Transverse colon (tissue), 4 donors: ENCODE measurements at regions of chr16 and their contacts with region 1.

Region 1: GRCh38 chr16:55465077-55465896 is 13.7 kb upstream of the MMP2 start:
- DNase-seq: peak; percentile 91
- H3K4me3 ChIP-seq: no peak overlapping the region
- H3K27ac ChIP-seq: no peak overlapping the region
- H3K4me1 ChIP-seq: peaks cover 0 to under 1% (median 0%) of the 10 kb centered on the region in 4 donors
- H3K27me3 ChIP-seq: no peaks in the 10 kb centered on the region
- CTCF ChIP-seq: peak; percentile 99 to 100 (median 100)
- EP300 ChIP-seq: no peak
- POLR2A ChIP-seq: no peak

Region 2: GRCh38 chr16:55076053-55076452 is 389.2 kb before region 1 on chr16:
- in situ Hi-C with region 1: no loop called
- intact Hi-C with region 1: no loop called
- DNase-seq: no peak
- H3K4me3 ChIP-seq: no peak overlapping the region
- H3K27ac ChIP-seq: no peak overlapping the region
- H3K4me1 ChIP-seq: no peaks in the 10 kb centered on the region
- H3K27me3 ChIP-seq: no peaks in the 10 kb centered on the region
- CTCF ChIP-seq: no peak
- EP300 ChIP-seq: no peak
- POLR2A ChIP-seq: no peak

Region 3: DNA sequence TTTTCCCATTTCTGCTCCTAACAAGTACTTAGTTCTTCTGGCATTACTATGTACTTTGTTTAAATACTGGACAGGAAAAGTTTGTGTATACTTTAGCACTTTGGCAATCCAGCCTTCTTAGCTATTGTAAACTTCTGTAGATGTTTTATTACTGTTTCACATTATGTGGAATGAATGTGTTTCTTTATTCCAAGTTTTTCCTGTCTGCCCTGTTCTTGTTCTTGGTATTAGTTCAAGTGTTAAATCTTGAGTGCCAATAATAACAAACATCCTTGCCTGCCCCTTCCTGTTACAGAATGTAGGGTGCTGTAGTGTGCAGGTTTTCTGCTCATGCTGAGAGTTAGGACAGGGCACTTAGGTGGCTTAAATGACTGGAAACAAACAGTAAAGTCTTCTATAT is 93.9 kb after region 1 on chr16:
- in situ Hi-C with region 1: no loop called
- intact Hi-C with region 1: no loop called
- DNase-seq: no peak
- H3K4me3 ChIP-seq: no peak overlapping the region
- H3K27ac ChIP-seq: peak overlapping the region in 1 of 4 donors; percentile 33
- H3K4me1 ChIP-seq: peaks cover 7 to 36% (median 17%) of the 10 kb centered on the region in 4 donors
- H3K27me3 ChIP-seq: no peaks in the 10 kb centered on the region
- CTCF ChIP-seq: no peak
- EP300 ChIP-seq: no peak
- POLR2A ChIP-seq: no peak

Region 4: DNA sequence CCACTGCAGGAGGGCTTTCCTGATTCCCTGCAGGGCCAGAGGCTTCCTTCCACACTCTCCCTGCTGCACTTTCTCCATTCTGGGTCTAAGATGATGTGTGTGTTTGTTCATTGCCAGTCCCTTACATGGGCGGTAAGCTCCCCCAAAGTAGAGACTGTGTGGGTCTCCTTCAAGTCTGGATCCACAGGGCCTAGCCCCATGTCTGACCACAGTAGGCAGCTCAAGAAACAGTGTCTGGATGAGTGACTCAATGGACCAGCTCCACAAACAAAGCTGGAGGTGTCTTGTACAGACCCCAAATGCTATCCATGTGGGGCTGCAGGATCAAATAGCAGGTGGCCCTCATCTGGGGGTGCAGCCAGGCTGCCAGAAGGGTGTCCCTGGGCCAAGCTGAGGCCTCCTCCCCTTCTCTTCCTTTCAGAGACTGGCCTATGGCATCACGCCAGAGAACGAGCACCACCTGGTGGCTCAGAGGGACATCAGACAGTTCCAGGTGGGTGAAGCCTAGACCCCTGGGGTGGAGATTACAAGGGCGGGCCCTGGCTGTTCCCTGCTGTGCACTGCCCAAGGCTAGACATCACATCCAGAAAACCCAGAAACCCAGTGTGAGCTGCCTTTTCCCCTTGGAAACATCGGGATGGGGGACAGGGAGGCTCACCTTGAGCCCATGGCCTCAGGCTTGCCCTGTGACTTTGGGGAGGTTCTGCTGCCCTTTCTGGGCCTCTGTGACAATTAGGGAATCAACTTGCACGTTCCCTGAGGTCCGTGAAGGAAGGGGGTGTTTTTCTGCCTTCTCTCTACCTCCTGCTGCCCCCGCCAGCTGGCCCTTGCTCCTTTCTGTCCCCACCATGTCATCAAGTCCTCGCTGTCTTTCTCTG is 236.4 kb after region 1 on chr16:
- in situ Hi-C with region 1: loop called (anchors 5 to 10 kb)
- intact Hi-C with region 1: loop called (anchors 5 kb)
- DNase-seq: peak; percentile 54
- H3K4me3 ChIP-seq: no peak overlapping the region
- H3K27ac ChIP-seq: no peak overlapping the region
- H3K4me1 ChIP-seq: no peaks in the 10 kb centered on the region
- H3K27me3 ChIP-seq: no peaks in the 10 kb centered on the region
- CTCF ChIP-seq: peak; percentile 48 to 56 (median 53)
- EP300 ChIP-seq: no peak
- POLR2A ChIP-seq: no peak

Region 5: GRCh38 chr16:55832758-55833540 is 367.7 kb after region 1 on chr16 and contains the start of gene CES1:
- in situ Hi-C with region 1: loop called in 3 of 4 experiments (anchors 10 to 25 kb)
- intact Hi-C with region 1: no loop called
- DNase-seq: peak; percentile 17
- H3K4me3 ChIP-seq: peak within 1 kb of the TSS in 2 of 4 donors; percentile 6 to 18
- H3K27ac ChIP-seq: peak within 1 kb of the TSS in 3 of 4 donors; percentile 33 to 55 (median 52)
- H3K4me1 ChIP-seq: no peaks in the 10 kb centered on the region
- H3K27me3 ChIP-seq: no peaks in the 10 kb centered on the region
- CTCF ChIP-seq: no peak
- EP300 ChIP-seq: no peak
- POLR2A ChIP-seq: no peak
- total RNA-seq, gene CES1: 6.8 to 23.2 (median 11.3) TPM